H1 (cell line): ENCODE measurements at regions of chr1 and their contacts with region 1.

Region 1: GRCh38 chr1:22641906-22642636 is 1.4 kb upstream of the C1QC start:
- DNase-seq: peak in 1 of 2 experiments; percentile 97
- H3K4me3 ChIP-seq: no peak overlapping the region
- H3K27ac ChIP-seq: no peak overlapping the region
- H3K4me1 ChIP-seq: peaks cover 0 to 6% (median 4%) of the 10 kb centered on the region in 4 experiments; a peak in 4 of 7 replicates
- H3K27me3 ChIP-seq: no peaks in the 10 kb centered on the region; a peak in 1 of 7 replicates
- CTCF ChIP-seq: peak; percentile 94 to 95 (median 94)
- EP300 ChIP-seq: no peak
- POLR2A ChIP-seq: no peak
- RAD21 ChIP-seq: peak; percentile 97 to 98

Region 2: DNA sequence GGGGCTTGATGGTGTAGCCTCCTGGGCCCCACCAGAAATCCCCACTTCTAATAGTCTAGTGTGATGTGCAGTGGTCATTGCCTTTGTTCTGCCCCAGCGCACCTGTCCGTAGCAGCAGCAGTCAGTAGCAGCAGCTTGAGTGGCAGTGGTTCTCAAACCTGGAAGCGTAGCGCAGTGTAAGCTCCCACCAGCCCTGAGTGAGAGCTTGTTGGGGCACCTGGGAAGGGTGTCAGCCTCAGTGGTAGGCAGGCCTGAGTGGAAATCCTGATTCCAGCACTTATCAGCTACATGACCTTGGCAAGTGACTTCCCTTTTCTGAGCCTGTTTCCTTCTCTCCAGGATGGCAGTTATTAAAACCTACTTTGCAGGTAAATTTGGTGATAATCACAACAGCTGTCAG is 120.4 kb before region 1 on chr1:
- CTCF ChIA-PET with region 1: interaction called, 70 read pairs
- POLR2A ChIA-PET with region 1: no interaction called
- DNase-seq: no peak
- H3K4me3 ChIP-seq: no peak overlapping the region
- H3K27ac ChIP-seq: no peak overlapping the region
- H3K4me1 ChIP-seq: no peaks in the 10 kb centered on the region
- H3K27me3 ChIP-seq: no peaks in the 10 kb centered on the region
- CTCF ChIP-seq: no peak
- EP300 ChIP-seq: no peak
- POLR2A ChIP-seq: no peak
- RAD21 ChIP-seq: no peak

Region 3: DNA sequence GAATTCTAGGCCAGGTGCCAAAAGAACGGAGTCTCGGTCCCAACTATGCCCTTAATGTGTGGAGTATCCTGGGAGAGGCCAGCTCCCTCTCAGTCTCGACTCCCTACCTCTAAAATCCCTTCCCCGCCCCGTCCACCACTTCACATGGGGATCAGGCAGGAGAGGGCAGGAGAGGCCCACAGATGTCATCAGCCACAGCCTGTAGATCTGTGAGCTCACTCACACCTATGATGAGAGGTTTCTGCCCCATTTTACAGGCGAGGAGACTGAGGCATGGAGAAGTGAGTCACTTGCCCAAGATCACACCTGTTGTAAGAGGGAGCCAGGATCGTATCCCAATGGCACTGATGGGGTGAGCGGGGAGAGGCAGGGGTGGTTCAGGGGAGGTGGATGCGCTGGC is 99.2 kb before region 1 on chr1:
- CTCF ChIA-PET with region 1: interaction called, 22 read pairs
- POLR2A ChIA-PET with region 1: no interaction called
- DNase-seq: no peak
- H3K4me3 ChIP-seq: no peak overlapping the region
- H3K27ac ChIP-seq: no peak overlapping the region
- H3K4me1 ChIP-seq: peaks cover 0 to 2% (median 0%) of the 10 kb centered on the region in 4 experiments; a peak in 1 of 7 replicates
- H3K27me3 ChIP-seq: peaks cover 0 to 4% (median 0%) of the 10 kb centered on the region in 4 experiments; a peak in 1 of 7 replicates
- CTCF ChIP-seq: peak in 2 of 3 experiments; percentile 19 to 31; a peak in 2 of 4 replicates
- EP300 ChIP-seq: no peak
- POLR2A ChIP-seq: no peak
- RAD21 ChIP-seq: peak; percentile 52 to 64

Region 4: GRCh38 chr1:22567197-22567596 is 74.9 kb before region 1 on chr1:
- CTCF ChIA-PET with region 1: interaction called, 12 read pairs
- POLR2A ChIA-PET with region 1: interaction called, 3 read pairs
- DNase-seq: no peak
- H3K4me3 ChIP-seq: no peak overlapping the region
- H3K27ac ChIP-seq: no peak overlapping the region
- H3K4me1 ChIP-seq: peaks cover 2 to 24% (median 14%) of the 10 kb centered on the region in 4 experiments
- H3K27me3 ChIP-seq: peaks cover 14 to 25% (median 21%) of the 10 kb centered on the region in 4 experiments
- CTCF ChIP-seq: no peak
- EP300 ChIP-seq: no peak
- POLR2A ChIP-seq: no peak
- RAD21 ChIP-seq: no peak

Region 5: DNA sequence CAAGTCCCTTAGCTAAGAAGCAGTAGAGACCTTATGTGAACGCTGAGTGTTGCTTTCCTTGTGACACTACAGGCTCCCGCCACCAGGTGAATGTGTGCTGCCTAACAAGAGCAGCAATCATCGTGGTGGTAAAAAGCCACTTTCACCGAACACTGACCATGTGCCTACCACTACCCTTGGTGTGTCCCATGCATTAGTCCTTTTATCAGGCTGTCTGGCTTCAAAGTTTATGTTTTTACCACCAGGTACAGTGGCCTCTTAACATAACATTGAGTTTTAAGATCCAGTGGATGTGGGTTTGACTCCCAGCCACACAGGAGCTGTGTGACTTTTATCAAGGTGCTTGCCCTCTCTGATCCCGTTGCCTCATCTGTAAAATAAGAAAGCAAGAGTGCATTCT is 12.6 kb after region 1 on chr1:
- CTCF ChIA-PET with region 1: interaction called, 41 read pairs
- POLR2A ChIA-PET with region 1: no interaction called
- DNase-seq: no peak
- H3K4me3 ChIP-seq: no peak overlapping the region
- H3K27ac ChIP-seq: no peak overlapping the region
- H3K4me1 ChIP-seq: no peaks in the 10 kb centered on the region; a peak in 1 of 7 replicates
- H3K27me3 ChIP-seq: no peaks in the 10 kb centered on the region; a peak in 3 of 7 replicates
- CTCF ChIP-seq: peak; percentile 22 to 68 (median 51)
- EP300 ChIP-seq: no peak
- POLR2A ChIP-seq: no peak
- RAD21 ChIP-seq: peak; percentile 13 to 33; a peak in 1 of 4 replicates